Activated T-helper 2 cell treated with anti-CD3 and anti-CD28 coated beads, Interferon-gamma antibody, Interleukin-2, Interleukin-4, amounts not matched to agents 10 μg/mL and 5 μg/mL and 100 μg/mL, durations not matched to agents 14 hours and 24 hours and 36 hours (primary cell): ENCODE measurements at regions of chr7 and their contacts with region 1.

Region 1: DNA sequence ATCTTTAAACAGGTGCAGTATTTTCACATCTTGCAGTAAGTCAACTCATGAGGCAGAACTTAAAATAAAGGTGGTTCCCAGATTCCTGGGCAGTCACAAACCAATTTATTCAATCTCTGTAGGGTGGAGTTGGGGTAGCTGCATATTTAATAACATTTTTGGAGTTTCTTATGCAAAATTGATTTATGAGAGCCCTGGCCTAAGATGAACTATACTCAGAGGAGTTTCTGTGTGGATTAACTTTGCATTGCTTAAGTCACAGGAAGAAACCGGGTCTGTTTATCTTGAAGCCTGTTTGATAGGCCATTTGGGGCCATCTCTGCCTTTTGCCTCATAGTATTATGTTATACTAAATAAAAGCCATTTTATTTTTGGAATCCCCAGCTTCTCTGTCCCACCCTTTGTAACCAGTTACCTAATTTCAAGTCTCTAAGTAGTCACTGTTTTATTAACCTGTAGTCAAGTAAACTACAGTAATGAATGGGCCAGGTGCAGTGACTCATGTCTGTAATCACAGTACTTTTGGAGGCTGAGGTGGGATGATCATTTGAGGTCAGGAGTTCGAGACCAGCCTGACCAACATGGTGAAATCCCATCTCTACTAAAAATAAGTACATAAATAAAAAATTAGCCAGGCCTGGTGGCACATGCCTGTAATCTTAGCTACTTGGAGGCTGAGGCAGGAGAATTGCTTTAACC is 104.4 kb upstream of the FAM3C start:
- DNase-seq: no peak
- H3K4me3 Mint-ChIP-seq: no peak overlapping the region
- H3K27ac Mint-ChIP-seq: peak overlapping the region; percentile 86
- H3K4me1 Mint-ChIP-seq: peaks cover 25% of the 10 kb centered on the region
- H3K27me3 Mint-ChIP-seq: no peaks in the 10 kb centered on the region

Region 2: GRCh38 chr7:121459148-121459547 is 41.4 kb before region 1 on chr7:
- intact Hi-C with region 1: no loop called
- DNase-seq: no peak
- H3K4me3 Mint-ChIP-seq: no peak overlapping the region
- H3K27ac Mint-ChIP-seq: no peak overlapping the region
- H3K4me1 Mint-ChIP-seq: peaks cover 3% of the 10 kb centered on the region
- H3K27me3 Mint-ChIP-seq: peaks cover 11% of the 10 kb centered on the region

Region 3: GRCh38 chr7:121480058-121480457 is 20.5 kb before region 1 on chr7:
- intact Hi-C with region 1: no loop called
- DNase-seq: no peak
- H3K4me3 Mint-ChIP-seq: no peak overlapping the region
- H3K27ac Mint-ChIP-seq: no peak overlapping the region
- H3K4me1 Mint-ChIP-seq: peaks cover 6% of the 10 kb centered on the region
- H3K27me3 Mint-ChIP-seq: peaks cover 2% of the 10 kb centered on the region

Region 4: GRCh38 chr7:121519548-121520521 is 19.3 kb after region 1 on chr7:
- intact Hi-C with region 1: loop called (anchors 2 kb)
- DNase-seq: no peak
- H3K4me3 Mint-ChIP-seq: no peak overlapping the region
- H3K27ac Mint-ChIP-seq: peak overlapping the region; percentile 14
- H3K4me1 Mint-ChIP-seq: peaks cover 31% of the 10 kb centered on the region
- H3K27me3 Mint-ChIP-seq: no peaks in the 10 kb centered on the region